ENCODE measurements at regions of chr14 and their contacts with region 1.

Region 1: GRCh38 chr14:63993992-63994391 is 141.2 kb downstream of the SYNE2 start:
- DNase-seq: peak; percentile 16
- H3K4me3 ChIP-seq: no peak overlapping the region
- H3K27ac ChIP-seq: no peak overlapping the region
- H3K4me1 ChIP-seq: peaks cover 5% of the 10 kb centered on the region
- H3K27me3 ChIP-seq: no peaks in the 10 kb centered on the region
- CTCF ChIP-seq: no peak
- POLR2A ChIP-seq: no peak

Region 2: GRCh38 chr14:63672417-63673180 is 321.4 kb before region 1 on chr14:
- CTCF ChIA-PET with region 1: no interaction called
- POLR2A ChIA-PET with region 1: no interaction called
- dilution Hi-C with region 1: no loop called
- intact Hi-C with region 1: no loop called
- DNase-seq: no peak
- H3K4me3 ChIP-seq: no peak overlapping the region
- H3K27ac ChIP-seq: no peak overlapping the region
- H3K4me1 ChIP-seq: peaks cover 5% of the 10 kb centered on the region
- H3K27me3 ChIP-seq: no peaks in the 10 kb centered on the region
- CTCF ChIP-seq: no peak
- POLR2A ChIP-seq: no peak

Region 3: DNA sequence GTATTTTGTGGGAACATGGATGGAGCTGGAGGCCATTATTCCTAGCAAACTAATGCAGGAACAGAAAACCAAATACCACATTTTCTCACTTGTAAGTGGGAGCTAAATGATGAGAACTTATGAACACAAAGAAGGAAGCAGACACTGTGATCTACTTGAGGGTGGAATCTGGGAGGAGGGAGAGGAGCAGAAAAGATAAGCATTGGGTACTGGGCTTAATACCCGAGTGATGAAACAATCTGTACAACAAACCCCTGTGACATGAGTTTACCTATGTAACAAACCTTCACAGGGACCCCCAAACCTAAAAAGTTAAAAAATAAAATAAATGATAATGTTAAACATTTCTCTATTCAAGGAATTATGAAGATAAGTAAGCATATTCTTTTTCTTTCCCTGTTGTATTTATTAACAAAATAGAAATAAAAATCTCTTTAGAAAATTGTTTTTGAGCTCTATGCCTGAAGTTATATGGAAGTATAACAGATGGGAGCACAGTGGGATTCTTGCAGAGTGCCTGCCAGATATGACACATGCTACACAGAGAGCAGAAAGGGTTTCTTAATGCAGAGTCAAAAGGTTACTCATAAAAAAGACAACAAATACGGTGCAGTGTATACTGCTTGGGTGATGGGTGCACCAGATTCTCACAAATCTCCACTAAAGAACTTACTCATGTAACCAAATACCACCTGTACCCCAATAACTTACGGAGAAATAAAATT is 193.2 kb before region 1 on chr14:
- CTCF ChIA-PET with region 1: interaction called, 6 read pairs
- POLR2A ChIA-PET with region 1: no interaction called
- dilution Hi-C with region 1: no loop called
- intact Hi-C with region 1: loop called (anchors 10 kb)
- DNase-seq: no peak
- H3K4me3 ChIP-seq: no peak overlapping the region
- H3K27ac ChIP-seq: no peak overlapping the region
- H3K4me1 ChIP-seq: peaks cover 2% of the 10 kb centered on the region
- H3K27me3 ChIP-seq: no peaks in the 10 kb centered on the region
- CTCF ChIP-seq: no peak
- POLR2A ChIP-seq: no peak

Measured in endothelial cell of umbilical vein (primary cell).